ENCODE measurements at regions of chr1 and their contacts with region 1.

Region 1: GRCh38 chr1:13965770-13966398 is 265.9 kb downstream of the PRDM2 start:
- DNase-seq: peak; percentile 71
- ATAC-seq: peak; percentile 93
- H3K4me3 ChIP-seq: no peak overlapping the region
- H3K27ac ChIP-seq: no peak overlapping the region
- H3K4me1 ChIP-seq: 0 out of 2 replicates have a peak, but pooled peaks cover 5% of the 10 kb centered on the region
- H3K27me3 ChIP-seq: no peaks in the 10 kb centered on the region
- CTCF ChIP-seq: peak; percentile 85

Region 2: DNA sequence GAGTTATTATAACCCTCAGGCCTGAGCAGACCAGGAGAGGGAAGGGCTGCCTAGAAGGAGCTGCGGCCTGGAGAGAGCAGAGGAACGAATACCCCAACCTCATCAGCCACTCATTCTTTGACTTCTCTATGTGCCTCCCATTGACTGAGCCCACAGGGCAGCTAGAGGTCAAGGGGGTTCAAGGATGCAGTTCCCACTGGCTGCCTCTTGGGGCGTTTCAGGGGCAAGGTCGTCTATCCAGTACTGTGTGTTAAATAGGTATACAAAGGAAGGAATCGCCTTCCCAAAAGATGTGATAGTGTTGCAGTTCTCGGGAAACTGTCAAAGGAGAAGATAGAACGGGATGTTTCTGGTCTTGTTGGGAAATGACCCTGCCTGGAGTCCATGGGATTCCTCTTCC is 15.2 kb before region 1 on chr1:
- CTCF ChIA-PET with region 1: no interaction called
- POLR2A ChIA-PET with region 1: no interaction called
- intact Hi-C with region 1: no loop called
- DNase-seq: no peak
- ATAC-seq: no peak
- H3K4me3 ChIP-seq: no peak overlapping the region
- H3K27ac ChIP-seq: no peak overlapping the region
- H3K4me1 ChIP-seq: no peaks in the 10 kb centered on the region
- H3K27me3 ChIP-seq: peaks cover 63% of the 10 kb centered on the region
- CTCF ChIP-seq: peak; percentile 37

Region 3: GRCh38 chr1:14103878-14104430 is 138.1 kb after region 1 on chr1:
- CTCF ChIA-PET with region 1: no interaction called
- POLR2A ChIA-PET with region 1: no interaction called
- intact Hi-C with region 1: loop called (anchors 5 kb)
- DNase-seq: no peak
- ATAC-seq: no peak
- H3K4me3 ChIP-seq: no peak overlapping the region
- H3K27ac ChIP-seq: no peak overlapping the region
- H3K4me1 ChIP-seq: peaks cover 4% of the 10 kb centered on the region
- H3K27me3 ChIP-seq: peaks cover 21% of the 10 kb centered on the region
- CTCF ChIP-seq: no peak

Region 4: DNA sequence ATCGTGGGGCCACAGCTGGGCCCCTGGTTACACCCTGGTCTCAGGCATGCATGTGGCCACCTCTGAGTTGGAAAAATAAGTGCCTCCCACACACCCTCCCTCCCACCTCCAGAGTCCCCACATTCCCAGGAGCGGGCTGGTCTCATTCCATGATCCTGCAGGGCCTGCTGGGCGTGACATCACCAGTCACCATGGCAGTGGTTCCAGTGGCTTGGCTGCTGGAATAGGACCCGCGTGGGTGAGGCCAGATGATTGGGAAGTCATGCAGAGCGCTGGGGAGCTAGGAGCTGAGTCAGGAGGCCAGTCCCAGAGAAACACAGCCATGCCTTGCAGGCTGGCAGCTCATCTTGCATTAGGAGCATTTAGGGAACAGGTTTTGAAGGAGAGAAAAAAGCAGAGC is 1062.2 kb after region 1 on chr1:
- CTCF ChIA-PET with region 1: no interaction called
- POLR2A ChIA-PET with region 1: no interaction called
- intact Hi-C with region 1: loop called (anchors 5 kb)
- DNase-seq: peak; percentile 52
- ATAC-seq: peak; percentile 54
- H3K4me3 ChIP-seq: no peak overlapping the region
- H3K27ac ChIP-seq: no peak overlapping the region
- H3K4me1 ChIP-seq: peaks cover 8% of the 10 kb centered on the region; the same call in 1 of the 2 replicates
- H3K27me3 ChIP-seq: no peaks in the 10 kb centered on the region
- CTCF ChIP-seq: no peak

Region 5: DNA sequence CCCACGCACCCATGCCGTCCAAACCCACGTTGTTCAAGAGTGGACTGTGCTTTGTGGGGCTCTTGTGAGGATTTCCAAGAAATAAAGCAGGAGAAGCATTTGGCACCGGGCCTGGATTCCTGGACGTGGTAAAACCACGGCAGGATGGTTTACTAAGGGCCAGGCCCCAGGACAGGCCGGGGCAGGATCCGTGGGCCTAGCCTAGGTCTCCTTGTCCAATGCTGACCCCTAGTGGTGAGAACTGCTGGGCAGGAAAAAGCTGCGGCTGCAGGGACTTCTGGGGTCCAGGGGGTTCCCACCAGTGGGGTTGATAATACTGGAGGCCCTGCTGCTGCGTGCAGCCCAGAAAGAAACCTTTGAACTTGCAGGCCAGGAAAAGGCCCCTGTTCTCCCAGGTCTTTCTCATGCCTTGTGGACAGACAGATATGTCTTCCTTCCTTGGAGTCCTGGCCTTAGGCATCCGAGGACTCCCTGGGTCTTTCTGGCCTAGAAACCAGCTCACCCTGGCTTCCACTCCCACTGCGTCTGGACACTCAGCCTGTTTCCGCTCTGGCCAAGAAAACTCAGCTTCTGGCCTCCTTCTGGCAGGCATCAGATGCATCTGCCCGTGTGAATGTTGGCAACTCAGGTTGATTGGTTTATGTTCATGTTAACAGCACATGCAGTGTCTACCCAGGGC is 1080.7 kb after region 1 on chr1:
- CTCF ChIA-PET with region 1: no interaction called
- POLR2A ChIA-PET with region 1: no interaction called
- intact Hi-C with region 1: loop called (anchors 1 kb)
- DNase-seq: peak; percentile 78
- ATAC-seq: peak; percentile 93
- H3K4me3 ChIP-seq: no peak overlapping the region
- H3K27ac ChIP-seq: no peak overlapping the region
- H3K4me1 ChIP-seq: no peaks in the 10 kb centered on the region
- H3K27me3 ChIP-seq: no peaks in the 10 kb centered on the region
- CTCF ChIP-seq: peak; percentile 96